ENCODE measurements at regions of chr12 and their contacts with region 1.

Region 1: DNA sequence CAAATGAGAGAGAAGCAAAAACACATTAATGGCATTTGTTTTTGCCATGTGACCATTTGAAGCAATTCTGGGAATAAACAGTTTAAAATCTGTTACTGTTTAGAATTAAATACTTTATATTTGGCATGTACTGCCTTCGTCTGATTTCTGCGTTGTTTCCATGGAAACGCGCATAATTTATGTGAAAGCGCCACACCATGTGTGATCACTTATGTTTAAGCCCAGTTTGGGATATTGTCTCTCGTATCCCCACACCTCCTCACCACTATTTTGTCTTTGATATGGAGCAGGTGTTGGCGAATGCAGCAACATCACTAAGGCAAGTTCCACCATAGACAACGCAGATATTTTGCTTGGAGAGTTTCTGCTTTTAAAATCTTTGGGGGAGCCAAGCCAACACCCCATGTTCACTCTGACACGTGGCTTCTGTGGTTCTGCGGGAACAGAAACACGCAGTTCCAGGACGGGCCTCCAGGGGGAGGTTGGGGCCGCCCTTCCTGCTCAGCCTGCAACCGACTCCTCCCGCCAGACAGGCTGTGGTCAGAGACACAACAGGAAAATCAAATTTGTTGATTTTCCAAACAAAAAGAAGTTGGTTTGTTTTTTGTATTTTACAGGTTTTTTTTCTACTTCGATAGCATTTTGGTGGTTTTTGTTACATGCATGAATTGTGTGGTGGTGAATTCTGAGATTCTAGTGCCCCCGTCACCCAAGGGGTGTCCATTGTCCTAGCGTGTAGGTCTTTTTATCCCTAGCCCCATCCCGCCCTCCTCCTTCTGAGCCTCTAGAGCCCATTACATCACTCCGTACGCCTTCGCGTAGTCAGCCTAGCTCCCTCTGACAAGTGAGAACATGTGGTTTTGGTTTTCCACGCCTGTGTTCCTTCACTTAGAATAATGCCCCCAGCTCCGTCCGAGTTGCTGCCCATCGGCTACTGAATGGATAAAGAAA is 101.9 kb upstream of the SFSWAP start:
- DNase-seq: peak; percentile 75 to 87
- ATAC-seq: peak; percentile 59 to 93 (median 88)
- H3K4me3 ChIP-seq: no peak overlapping the region
- H3K27ac ChIP-seq: no peak overlapping the region
- H3K4me1 ChIP-seq: no peaks in the 10 kb centered on the region
- H3K27me3 ChIP-seq: peaks cover 0 to 20% (median 0%) of the 10 kb centered on the region in 3 donors
- CTCF ChIP-seq: peak; percentile 77

Region 2: GRCh38 chr12:131454418-131455217 is 154.4 kb before region 1 on chr12:
- intact Hi-C with region 1: no loop called
- DNase-seq: no peak
- ATAC-seq: peak in 1 of 4 donors; percentile 59
- H3K4me3 ChIP-seq: no peak overlapping the region
- H3K27ac ChIP-seq: no peak overlapping the region
- H3K4me1 ChIP-seq: no peaks in the 10 kb centered on the region
- H3K27me3 ChIP-seq: peaks cover 0 to 2% (median 0%) of the 10 kb centered on the region in 3 donors
- CTCF ChIP-seq: peak; percentile 31

Region 3: DNA sequence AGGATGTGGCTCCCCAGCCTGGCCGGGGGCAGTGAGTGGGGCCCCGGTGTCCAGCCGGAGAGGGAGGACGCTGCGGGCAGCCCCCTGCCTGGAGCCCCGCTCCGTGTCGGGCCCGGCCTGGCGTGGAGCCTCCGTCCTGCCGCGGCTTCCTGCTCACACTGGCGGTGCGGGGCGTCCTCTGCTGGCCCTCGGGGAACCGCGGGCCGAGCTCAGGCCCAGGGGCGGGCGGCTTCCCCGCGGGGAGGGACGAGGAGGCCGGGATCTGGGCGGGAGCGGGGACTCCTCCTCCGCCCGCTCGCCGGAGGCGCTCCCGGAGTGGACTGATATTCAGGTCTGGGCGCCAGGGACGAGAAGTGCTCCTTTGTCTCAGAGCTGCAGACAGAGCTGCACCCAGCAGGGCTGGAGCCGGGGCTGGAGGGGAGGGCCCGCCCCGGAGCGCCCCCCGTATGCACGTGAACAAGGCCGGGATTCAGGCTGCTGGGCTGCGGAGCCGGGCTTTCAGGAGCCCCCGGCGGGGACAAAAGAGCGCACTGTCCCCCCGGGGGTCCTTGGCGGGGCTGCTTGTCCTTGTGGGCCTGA is 221.4 kb after region 1 on chr12:
- intact Hi-C with region 1: loop called in 1 of 2 experiments (anchors 5 kb)
- DNase-seq: peak; percentile 87 to 90
- ATAC-seq: peak; percentile 77 to 89 (median 81)
- H3K4me3 ChIP-seq: peak overlapping the region; percentile 64
- H3K27ac ChIP-seq: no peak overlapping the region
- H3K4me1 ChIP-seq: peaks cover 5% of the 10 kb centered on the region
- H3K27me3 ChIP-seq: peaks cover 0 to 77% (median 15%) of the 10 kb centered on the region in 3 donors
- CTCF ChIP-seq: peak; percentile 56

Region 4: DNA sequence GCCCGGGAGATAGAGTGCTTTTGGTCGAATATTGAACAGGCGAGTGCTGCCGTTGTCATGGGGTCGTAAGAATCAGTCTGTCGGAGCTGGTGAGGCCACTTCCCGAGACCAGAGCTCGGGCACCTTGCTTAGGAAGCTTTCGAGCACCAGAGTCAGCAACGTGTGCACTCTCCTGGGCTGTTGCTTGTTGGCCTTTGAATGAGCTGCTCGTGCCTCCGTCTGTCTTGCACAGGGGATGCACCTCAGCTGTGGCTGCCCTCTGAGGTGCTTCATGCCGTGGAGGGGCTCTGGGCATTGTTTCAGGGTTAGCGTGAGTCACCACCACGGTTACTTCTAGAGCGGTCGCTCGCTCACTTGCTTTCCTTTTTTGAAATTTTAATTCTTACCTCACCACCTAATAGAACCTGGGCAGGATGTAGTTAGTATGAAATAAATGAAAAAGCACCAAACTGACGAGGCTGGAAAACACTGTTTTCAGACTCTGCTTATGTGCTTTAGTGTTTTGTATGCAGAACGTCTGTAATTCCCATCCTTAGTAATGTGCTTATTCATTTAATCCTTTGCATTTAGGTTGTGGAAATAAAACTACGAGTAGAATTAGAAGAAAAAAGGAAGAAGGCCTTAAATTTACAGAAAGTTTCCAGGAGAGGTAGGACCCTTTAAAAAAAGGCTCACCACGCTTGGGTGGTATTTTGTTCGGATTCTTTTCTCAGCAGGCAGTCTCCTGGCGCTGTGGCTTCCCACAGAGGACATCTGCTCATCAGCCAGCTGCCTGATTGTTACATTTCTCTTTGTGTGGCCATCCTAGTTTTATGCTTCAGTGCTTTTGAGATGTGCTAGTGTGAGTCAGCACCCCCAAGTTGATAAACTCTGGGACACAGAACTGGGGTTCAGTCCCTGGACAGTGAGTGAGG is 381.3 kb after region 1 on chr12:
- intact Hi-C with region 1: loop called in 1 of 2 experiments (anchors 5 kb)
- DNase-seq: no peak
- ATAC-seq: no peak
- H3K4me3 ChIP-seq: no peak overlapping the region
- H3K27ac ChIP-seq: no peak overlapping the region
- H3K4me1 ChIP-seq: no peaks in the 10 kb centered on the region
- H3K27me3 ChIP-seq: no peaks in the 10 kb centered on the region
- CTCF ChIP-seq: no peak

Region 5: DNA sequence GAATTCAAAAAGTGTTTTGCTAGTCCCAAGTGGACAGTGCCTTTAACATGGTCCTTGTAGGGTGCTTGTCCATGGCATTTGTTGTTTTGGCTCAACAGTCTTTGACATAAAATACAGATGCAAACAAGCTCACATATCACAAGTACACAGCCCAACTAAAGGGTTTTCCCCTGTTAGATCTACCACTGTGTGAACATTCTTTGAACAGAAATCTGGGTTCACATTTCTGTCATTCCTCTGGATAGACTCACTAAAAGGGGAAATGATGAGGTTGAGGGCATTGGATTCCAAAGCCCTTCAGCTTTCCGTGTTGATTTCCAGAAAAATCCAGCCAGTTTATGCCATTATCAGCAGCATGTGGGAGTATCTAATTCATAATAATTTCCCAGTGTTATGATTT is 394.8 kb after region 1 on chr12:
- intact Hi-C with region 1: loop called in 1 of 2 experiments (anchors 5 kb)
- DNase-seq: no peak
- ATAC-seq: no peak
- H3K4me3 ChIP-seq: no peak overlapping the region
- H3K27ac ChIP-seq: no peak overlapping the region
- H3K4me1 ChIP-seq: no peaks in the 10 kb centered on the region
- H3K27me3 ChIP-seq: no peaks in the 10 kb centered on the region
- CTCF ChIP-seq: no peak